Caco-2 (cell line): ENCODE measurements at regions of chr10 and their contacts with region 1.

Region 1: DNA sequence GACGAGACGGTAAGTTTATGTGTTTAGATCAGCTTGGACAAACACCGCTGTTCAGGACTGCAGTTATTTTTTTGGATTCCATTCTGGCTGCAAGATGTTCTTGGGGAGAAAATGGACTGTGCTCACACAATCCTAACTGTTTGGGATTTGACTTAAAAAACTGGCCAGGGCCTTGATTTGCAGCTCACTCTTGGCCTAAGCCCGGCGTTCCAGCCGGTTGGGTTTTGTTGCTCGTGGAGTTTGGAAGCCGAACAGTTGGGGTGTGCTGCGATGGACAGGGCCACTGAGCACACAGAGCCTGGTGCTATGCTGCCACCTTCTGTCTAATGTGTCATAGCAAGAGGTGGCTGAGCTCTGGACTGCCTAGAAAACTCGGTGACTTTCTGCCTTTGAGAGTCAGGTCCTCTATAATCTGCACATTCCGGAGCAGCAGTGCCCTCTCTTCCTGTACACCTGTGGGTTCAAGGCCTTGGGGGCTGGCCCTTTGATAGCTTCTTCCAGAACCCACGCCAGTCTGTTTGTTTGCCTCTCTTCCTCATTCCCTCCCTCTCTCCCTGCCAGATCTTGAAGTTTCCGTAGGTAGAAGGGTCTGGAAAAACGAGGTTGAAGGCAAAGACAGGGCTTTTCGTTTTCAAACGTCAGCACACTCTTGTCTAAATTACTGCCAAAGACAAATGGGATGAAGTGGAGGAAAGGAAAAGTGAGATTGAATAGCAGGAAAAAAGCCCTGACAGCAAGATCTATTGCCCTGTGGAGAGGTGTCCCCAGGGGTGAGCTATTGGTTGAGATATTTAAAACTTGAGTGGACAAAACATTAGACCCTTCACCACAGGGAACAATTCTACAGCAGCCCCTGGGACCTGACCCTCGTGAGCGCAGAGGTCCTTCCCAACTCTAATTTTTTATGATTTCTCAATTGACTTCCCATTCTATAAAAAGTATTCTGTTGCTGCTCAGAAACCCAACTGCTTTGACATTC is 167.5 kb upstream of the HABP2 start:
- DNase-seq: peak; percentile 80
- H3K4me3 ChIP-seq: no peak overlapping the region
- H3K4me3 Mint-ChIP-seq: no peak overlapping the region
- H3K27ac Mint-ChIP-seq: no peak overlapping the region
- H3K4me1 ChIP-seq: no peaks in the 10 kb centered on the region
- H3K4me1 Mint-ChIP-seq: peaks cover 6% of the 10 kb centered on the region
- H3K27me3 ChIP-seq: no peaks in the 10 kb centered on the region
- H3K27me3 Mint-ChIP-seq: peaks cover 3% of the 10 kb centered on the region
- CTCF ChIP-seq: peak; percentile 84 to 93

Region 2: DNA sequence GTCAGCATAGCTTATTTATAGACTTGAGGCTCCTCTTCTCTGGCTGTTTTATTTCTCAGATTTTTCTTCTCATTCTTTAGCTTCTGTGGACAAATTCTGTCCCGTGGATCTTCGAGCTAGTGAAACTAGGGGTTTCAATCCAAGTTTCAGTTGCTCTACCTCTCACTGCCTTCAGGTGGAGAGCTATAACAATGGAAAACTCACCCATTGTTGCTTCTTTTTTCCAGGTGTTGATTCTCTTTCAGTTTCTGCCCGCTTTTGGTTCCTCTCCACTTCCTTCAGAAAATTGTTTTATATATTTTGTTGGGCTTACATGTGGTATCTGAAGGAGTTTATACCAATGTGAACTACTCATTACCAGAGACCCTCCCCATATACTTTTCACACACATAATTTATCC is 169.2 kb before region 1 on chr10:
- CTCF ChIA-PET with region 1: interaction called, 32 read pairs
- POLR2A ChIA-PET with region 1: no interaction called
- intact Hi-C with region 1: loop called (anchors 1 kb)
- DNase-seq: peak in 1 of 2 experiments; percentile 31
- H3K4me3 ChIP-seq: no peak overlapping the region
- H3K4me3 Mint-ChIP-seq: no peak overlapping the region
- H3K27ac Mint-ChIP-seq: no peak overlapping the region
- H3K4me1 ChIP-seq: 0 out of 2 replicates have a peak, but pooled peaks cover 3% of the 10 kb centered on the region
- H3K4me1 Mint-ChIP-seq: peaks cover 7% of the 10 kb centered on the region
- H3K27me3 ChIP-seq: no peaks in the 10 kb centered on the region
- H3K27me3 Mint-ChIP-seq: peaks cover 3% of the 10 kb centered on the region
- CTCF ChIP-seq: peak; percentile 41 to 42

Region 3: GRCh38 chr10:113241599-113242360 is 143.5 kb before region 1 on chr10:
- CTCF ChIA-PET with region 1: no interaction called
- POLR2A ChIA-PET with region 1: no interaction called
- intact Hi-C with region 1: loop called (anchors 1 kb)
- DNase-seq: no peak
- H3K4me3 ChIP-seq: no peak overlapping the region
- H3K4me3 Mint-ChIP-seq: no peak overlapping the region
- H3K27ac Mint-ChIP-seq: no peak overlapping the region
- H3K4me1 ChIP-seq: no peaks in the 10 kb centered on the region
- H3K4me1 Mint-ChIP-seq: no peaks in the 10 kb centered on the region
- H3K27me3 ChIP-seq: no peaks in the 10 kb centered on the region
- H3K27me3 Mint-ChIP-seq: peaks cover 8% of the 10 kb centered on the region
- CTCF ChIP-seq: no peak

Region 4: DNA sequence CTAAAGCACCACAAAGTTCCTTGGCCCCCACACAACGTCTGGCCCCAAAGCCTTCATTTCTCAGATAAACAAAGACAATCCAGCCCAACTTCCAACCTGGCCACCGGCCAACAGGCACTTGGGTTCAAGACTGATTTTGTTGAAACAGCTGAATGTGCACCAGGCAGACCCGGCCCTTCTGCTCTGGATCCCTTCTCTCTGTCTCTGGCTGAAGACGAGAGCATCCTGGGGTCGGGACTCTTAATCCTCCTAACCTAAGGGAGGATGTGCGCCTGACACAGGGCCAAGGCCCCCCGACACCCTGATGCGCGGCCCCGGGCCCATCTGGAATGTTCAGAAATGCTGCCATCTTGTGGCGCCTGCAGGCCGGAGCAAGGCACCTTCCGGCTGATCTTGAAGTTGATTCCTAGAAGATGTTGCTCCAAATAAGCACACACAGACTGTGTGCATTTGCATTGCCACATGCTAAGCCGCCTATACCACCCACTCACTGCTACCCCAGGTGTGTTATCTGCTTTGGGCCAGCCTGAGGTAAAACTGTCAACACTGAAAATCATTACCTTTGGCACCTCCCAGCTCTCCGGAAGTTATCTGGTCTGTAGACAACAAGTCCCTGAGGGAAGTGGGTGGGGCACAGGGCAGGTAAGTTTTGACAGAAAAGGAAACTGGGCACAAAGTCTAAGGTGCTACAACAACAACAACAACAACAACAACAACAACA is 69.2 kb after region 1 on chr10:
- CTCF ChIA-PET with region 1: no interaction called
- POLR2A ChIA-PET with region 1: no interaction called
- intact Hi-C with region 1: loop called (anchors 2 kb)
- DNase-seq: peak; percentile 53 to 58
- H3K4me3 ChIP-seq: no peak overlapping the region
- H3K4me3 Mint-ChIP-seq: no peak overlapping the region
- H3K27ac Mint-ChIP-seq: no peak overlapping the region
- H3K4me1 ChIP-seq: peaks cover 12% of the 10 kb centered on the region
- H3K4me1 Mint-ChIP-seq: no peaks in the 10 kb centered on the region
- H3K27me3 ChIP-seq: no peaks in the 10 kb centered on the region
- H3K27me3 Mint-ChIP-seq: peaks cover 3% of the 10 kb centered on the region
- CTCF ChIP-seq: peak; percentile 73 to 76

Region 5: GRCh38 chr10:113563306-113564088 is 178.2 kb after region 1 on chr10:
- CTCF ChIA-PET with region 1: interaction called, 6 read pairs
- POLR2A ChIA-PET with region 1: no interaction called
- intact Hi-C with region 1: loop called (anchors 1 kb)
- DNase-seq: peak; percentile 72 to 87
- H3K4me3 ChIP-seq: peak overlapping the region; percentile 31
- H3K4me3 Mint-ChIP-seq: peak overlapping the region; percentile 80
- H3K27ac Mint-ChIP-seq: peak overlapping the region; percentile 85
- H3K4me1 ChIP-seq: peaks cover 40% of the 10 kb centered on the region
- H3K4me1 Mint-ChIP-seq: peaks cover 46% of the 10 kb centered on the region
- H3K27me3 ChIP-seq: no peaks in the 10 kb centered on the region
- H3K27me3 Mint-ChIP-seq: no peaks in the 10 kb centered on the region
- CTCF ChIP-seq: peak; percentile 98

Region 6: GRCh38 chr10:114002422-114002821 is 617.1 kb after region 1 on chr10:
- CTCF ChIA-PET with region 1: no interaction called
- POLR2A ChIA-PET with region 1: no interaction called
- intact Hi-C with region 1: no loop called
- DNase-seq: no peak
- H3K4me3 ChIP-seq: no peak overlapping the region
- H3K4me3 Mint-ChIP-seq: no peak overlapping the region
- H3K27ac Mint-ChIP-seq: no peak overlapping the region
- H3K4me1 ChIP-seq: no peaks in the 10 kb centered on the region
- H3K4me1 Mint-ChIP-seq: no peaks in the 10 kb centered on the region
- H3K27me3 ChIP-seq: no peaks in the 10 kb centered on the region
- H3K27me3 Mint-ChIP-seq: peaks cover 6% of the 10 kb centered on the region
- CTCF ChIP-seq: no peak